ENCODE measurements at regions of chr16 and their contacts with region 1.

Region 1: DNA sequence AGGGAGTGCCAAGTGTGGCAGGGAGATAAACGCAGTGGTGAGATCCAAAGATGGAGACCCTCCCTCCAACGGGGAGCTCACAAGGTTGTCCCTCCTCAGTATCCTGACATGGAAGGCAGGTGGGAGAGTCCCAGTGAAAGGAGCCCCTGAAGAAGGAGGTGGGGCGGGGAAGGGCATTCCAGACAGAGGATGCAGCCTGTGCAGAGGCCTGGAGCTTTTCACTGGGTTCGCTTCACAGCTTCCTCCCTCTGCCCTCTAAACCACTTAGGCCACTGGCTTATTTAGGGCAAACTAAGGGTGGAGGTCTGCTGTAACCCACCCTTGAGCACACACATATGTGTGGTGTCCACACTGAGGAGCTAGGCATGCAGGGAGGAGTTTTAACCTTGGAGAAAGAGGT is 1.8 kb downstream of the GSG1L start:
- DNase-seq: no peak
- H3K4me3 ChIP-seq: peak overlapping the region in 1 of 2 donors; percentile 85
- H3K27ac ChIP-seq: peak overlapping the region in 1 of 2 donors; percentile 64
- H3K4me1 ChIP-seq: peaks cover 3 to 14% of the 10 kb centered on the region in 2 donors
- H3K27me3 ChIP-seq: no peaks in the 10 kb centered on the region
- CTCF ChIP-seq: no peak

Region 2: DNA sequence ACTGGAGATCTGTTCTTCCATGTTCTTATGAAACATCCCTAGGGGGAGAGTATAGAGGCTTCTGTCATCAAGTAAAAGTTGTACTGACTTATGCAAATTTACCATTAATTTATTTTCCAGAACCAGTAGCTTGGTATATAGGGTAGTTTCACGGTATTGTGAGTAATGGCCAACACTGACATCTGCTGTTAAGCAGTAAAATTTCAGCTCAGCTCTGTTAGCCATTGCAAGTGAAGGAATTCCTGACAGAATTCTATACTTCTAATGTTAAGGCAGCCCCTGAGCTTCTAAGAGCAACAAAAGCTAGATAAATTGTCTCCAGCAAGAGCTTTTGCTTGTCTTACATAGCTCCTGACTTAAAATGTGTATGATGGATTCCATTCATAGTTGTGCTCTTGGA is 1608.5 kb before region 1 on chr16:
- intact Hi-C with region 1: no loop called
- DNase-seq: no peak
- H3K4me3 ChIP-seq: no peak overlapping the region
- H3K27ac ChIP-seq: peak overlapping the region in 1 of 2 donors; percentile 63
- H3K4me1 ChIP-seq: no peaks in the 10 kb centered on the region
- H3K27me3 ChIP-seq: no peaks in the 10 kb centered on the region
- CTCF ChIP-seq: no peak

Region 3: GRCh38 chr16:28042811-28043210 is 18.9 kb before region 1 on chr16:
- intact Hi-C with region 1: loop called (anchors 1 kb)
- DNase-seq: no peak
- H3K4me3 ChIP-seq: peak overlapping the region; percentile 19 to 26
- H3K27ac ChIP-seq: peak overlapping the region; percentile 90 to 93
- H3K4me1 ChIP-seq: peaks cover 0 to 2% of the 10 kb centered on the region in 2 donors
- H3K27me3 ChIP-seq: no peaks in the 10 kb centered on the region
- CTCF ChIP-seq: peak in 1 of 3 experiments; percentile 12

Measured in ascending aorta (tissue), 2 donors.